ENCODE measurements at regions of chr1 and their contacts with region 1.

Region 1: DNA sequence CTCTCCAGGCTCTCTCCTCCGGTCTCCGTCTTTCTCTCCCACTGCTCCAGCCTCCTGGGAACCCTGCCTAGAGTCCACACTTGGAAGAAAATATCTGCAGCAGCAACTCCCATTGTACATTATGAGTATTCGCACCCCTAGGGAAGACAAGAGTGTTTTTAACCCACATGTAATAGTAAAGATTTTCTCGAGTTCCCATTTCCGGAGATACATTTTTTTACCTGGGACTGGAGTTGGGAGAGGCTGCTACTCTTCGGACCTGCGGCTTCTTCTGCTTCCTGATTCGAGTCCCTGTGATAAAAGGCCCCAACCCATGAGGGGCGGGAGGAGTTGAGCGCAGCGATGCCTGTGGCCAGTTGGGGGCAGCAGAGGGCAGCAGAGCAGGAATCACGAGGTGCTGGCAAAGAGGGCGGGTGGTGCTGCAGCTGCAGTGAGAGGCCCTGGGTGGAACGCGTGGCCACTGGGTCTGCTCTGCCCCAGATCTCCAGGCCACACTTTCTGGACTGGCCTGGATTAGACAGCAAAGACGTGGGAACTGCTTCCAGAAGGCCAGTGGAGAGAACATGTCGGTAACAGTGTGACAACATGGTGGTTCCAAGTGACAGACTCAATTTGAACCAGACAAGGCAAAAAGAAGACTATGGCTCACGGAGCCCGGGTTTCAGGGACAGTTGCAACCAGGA is 221.0 kb upstream of the CSF3R start:
- DNase-seq: peak; percentile 81

Region 2: GRCh38 chr1:37040773-37041172 is 337.1 kb after region 1 on chr1:
- intact Hi-C with region 1: loop called (anchors 5 kb)
- DNase-seq: no peak